ENCODE measurements at regions of chr9 and their contacts with region 1.

Region 1: GRCh38 chr9:128296337-128297220 is 20.5 kb downstream of the SWI5 start:
- DNase-seq: no peak
- H3K4me3 ChIP-seq: no peak overlapping the region
- H3K27ac ChIP-seq: no peak overlapping the region
- H3K4me1 ChIP-seq: peaks cover 6% of the 10 kb centered on the region
- H3K27me3 ChIP-seq: no peaks in the 10 kb centered on the region
- CTCF ChIP-seq: no peak
- POLR2A ChIP-seq: no peak

Region 2: DNA sequence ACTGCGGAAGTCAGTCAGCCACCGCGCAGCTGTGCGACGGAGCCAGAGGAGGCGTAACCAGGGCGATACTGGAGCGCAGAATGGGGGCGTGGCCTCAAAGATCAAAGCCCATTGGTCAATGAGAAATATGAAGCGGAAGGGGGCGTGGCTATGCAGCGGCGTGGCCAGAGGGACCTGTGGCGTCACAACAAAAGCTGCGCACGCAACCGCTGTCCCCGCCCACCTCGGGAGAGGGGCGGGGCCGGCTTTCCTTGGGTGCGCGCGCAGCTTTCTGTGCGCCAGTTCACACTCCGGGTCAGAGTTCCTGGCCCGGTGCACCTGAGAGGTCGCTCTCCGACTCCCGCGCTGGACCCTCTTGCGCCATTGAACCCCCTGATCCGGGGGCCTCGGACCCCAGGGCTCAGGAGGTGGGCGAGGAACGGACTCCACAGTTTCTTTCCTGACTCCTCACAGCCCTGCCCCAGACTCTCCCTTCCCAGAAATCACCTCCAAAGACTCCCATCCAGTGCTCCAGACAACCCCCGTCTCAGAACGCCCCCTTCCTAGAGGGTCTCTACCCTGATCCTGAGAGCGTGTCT is 20.5 kb before region 1 on chr9 and contains the starts of genes GOLGA2 and SWI5:
- CTCF ChIA-PET with region 1: interaction called, 9 read pairs
- POLR2A ChIA-PET with region 1: no interaction called
- dilution Hi-C with region 1: no loop called
- intact Hi-C with region 1: loop called (anchors 1 kb)
- DNase-seq: peak; percentile 100
- H3K4me3 ChIP-seq: peak within 1 kb of the TSS; percentile 80 to 95 (median 81)
- H3K27ac ChIP-seq: peak within 1 kb of the TSS; percentile 89
- H3K4me1 ChIP-seq: peaks cover 27% of the 10 kb centered on the region
- H3K27me3 ChIP-seq: no peaks in the 10 kb centered on the region
- CTCF ChIP-seq: no peak
- POLR2A ChIP-seq: peak; percentile 89
- total RNA-seq, gene GOLGA2: 107 and 114 TPM in 2 replicates
- total RNA-seq, gene SWI5: 21.2 and 25.2 TPM in 2 replicates

Region 3: DNA sequence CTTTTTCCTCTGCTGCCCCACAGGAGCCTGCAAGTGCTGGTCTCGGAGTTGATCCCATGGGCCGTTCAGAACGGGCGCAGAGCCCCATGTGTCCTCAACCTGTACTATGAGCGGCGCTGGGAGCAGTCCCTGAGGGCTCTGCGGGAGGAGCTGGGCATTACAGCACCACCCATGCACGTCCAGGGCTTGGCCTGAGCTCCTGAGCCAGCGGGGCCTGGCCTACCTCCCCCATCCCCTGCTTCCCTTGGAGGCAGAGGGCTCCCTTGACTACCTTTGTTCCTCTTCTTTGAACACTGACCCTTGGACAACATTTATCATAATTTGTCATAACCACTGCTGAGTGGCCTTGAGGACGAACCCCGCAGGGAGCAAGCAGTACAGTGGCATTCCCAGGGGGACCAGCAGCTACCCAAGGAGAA is 36.9 kb after region 1 on chr9:
- CTCF ChIA-PET with region 1: interaction called, 11 read pairs
- POLR2A ChIA-PET with region 1: interaction called, 4 read pairs
- dilution Hi-C with region 1: no loop called
- intact Hi-C with region 1: no loop called
- DNase-seq: no peak
- H3K4me3 ChIP-seq: no peak overlapping the region
- H3K27ac ChIP-seq: no peak overlapping the region
- H3K4me1 ChIP-seq: no peaks in the 10 kb centered on the region
- H3K27me3 ChIP-seq: no peaks in the 10 kb centered on the region
- CTCF ChIP-seq: no peak
- POLR2A ChIP-seq: no peak

Region 4: DNA sequence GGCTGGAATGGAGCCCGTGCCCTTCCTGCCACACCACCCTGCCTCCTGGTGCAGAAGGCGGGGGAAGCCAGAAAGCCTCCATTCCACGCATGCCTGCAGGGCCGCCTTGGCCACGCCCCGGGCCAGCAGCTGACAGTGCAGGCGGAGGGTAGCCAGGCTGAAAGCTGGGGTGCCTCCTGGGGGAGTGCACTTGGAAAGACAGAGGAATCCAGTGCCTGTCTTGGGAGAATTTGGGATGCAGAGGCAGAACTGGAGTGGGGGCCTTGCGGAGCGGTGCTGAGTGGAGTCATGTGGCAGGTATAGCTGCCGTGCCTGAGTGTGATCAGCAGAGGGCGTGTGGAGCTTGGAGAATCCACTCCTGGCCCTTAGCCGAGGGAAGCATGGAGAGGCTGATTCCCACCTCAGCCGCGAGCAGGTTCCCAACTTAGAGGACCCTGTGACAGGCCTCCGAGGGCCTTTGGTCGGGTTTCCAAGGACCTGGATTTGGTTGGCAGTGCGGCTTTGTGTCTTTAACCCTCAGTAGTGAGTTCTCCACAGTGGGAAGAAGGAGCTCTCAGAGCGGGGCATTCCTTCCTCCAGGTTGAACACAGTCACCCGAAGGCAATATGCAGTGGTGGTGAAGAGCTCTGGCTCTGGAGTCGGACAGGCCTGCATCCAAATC is 65.5 kb after region 1 on chr9:
- CTCF ChIA-PET with region 1: interaction called, 38 read pairs
- POLR2A ChIA-PET with region 1: no interaction called
- dilution Hi-C with region 1: no loop called
- intact Hi-C with region 1: loop called (anchors 1 kb)
- DNase-seq: peak; percentile 87
- H3K4me3 ChIP-seq: peak overlapping the region in 2 of 3 experiments; percentile 37 to 48
- H3K27ac ChIP-seq: no peak overlapping the region
- H3K4me1 ChIP-seq: peaks cover 17% of the 10 kb centered on the region
- H3K27me3 ChIP-seq: no peaks in the 10 kb centered on the region
- CTCF ChIP-seq: peak; percentile 79 to 92
- POLR2A ChIP-seq: peak; percentile 66

Region 5: GRCh38 chr9:128383007-128383753 is 86.6 kb after region 1 on chr9:
- CTCF ChIA-PET with region 1: no interaction called
- POLR2A ChIA-PET with region 1: no interaction called
- dilution Hi-C with region 1: no loop called
- intact Hi-C with region 1: no loop called
- DNase-seq: no peak
- H3K4me3 ChIP-seq: no peak overlapping the region
- H3K27ac ChIP-seq: no peak overlapping the region
- H3K4me1 ChIP-seq: no peaks in the 10 kb centered on the region
- H3K27me3 ChIP-seq: no peaks in the 10 kb centered on the region
- CTCF ChIP-seq: no peak
- POLR2A ChIP-seq: no peak

Region 6: GRCh38 chr9:128420060-128420650 is 123.6 kb after region 1 on chr9:
- CTCF ChIA-PET with region 1: interaction called, 23 read pairs
- POLR2A ChIA-PET with region 1: no interaction called
- dilution Hi-C with region 1: no loop called
- intact Hi-C with region 1: no loop called
- DNase-seq: peak; percentile 63
- H3K4me3 ChIP-seq: peak overlapping the region; percentile 53 to 65 (median 59)
- H3K27ac ChIP-seq: no peak overlapping the region
- H3K4me1 ChIP-seq: peaks cover 13% of the 10 kb centered on the region
- H3K27me3 ChIP-seq: peaks cover 6 to 9% of the 10 kb centered on the region in 2 experiments
- CTCF ChIP-seq: peak; percentile 85 to 89
- POLR2A ChIP-seq: peak; percentile 28

Region 7: GRCh38 chr9:129394061-129394885 is 1097.7 kb after region 1 on chr9:
- CTCF ChIA-PET with region 1: no interaction called
- POLR2A ChIA-PET with region 1: no interaction called
- dilution Hi-C with region 1: no loop called
- intact Hi-C with region 1: no loop called
- DNase-seq: no peak
- H3K4me3 ChIP-seq: no peak overlapping the region
- H3K27ac ChIP-seq: no peak overlapping the region
- H3K4me1 ChIP-seq: no peaks in the 10 kb centered on the region
- H3K27me3 ChIP-seq: peaks cover 0 to 2% of the 10 kb centered on the region in 2 experiments
- CTCF ChIP-seq: no peak
- POLR2A ChIP-seq: no peak